WTC11 (cell line): ENCODE measurements at regions of chr6 and their contacts with region 1.

Region 1: GRCh38 chr6:32984605-32985389 is 16.4 kb downstream of the BRD2 start:
- DNase-seq: peak; percentile 94
- ATAC-seq: peak; percentile 79
- H3K4me3 Mint-ChIP-seq: no peak overlapping the region
- H3K27ac Mint-ChIP-seq: peak overlapping the region; percentile 82
- H3K4me1 Mint-ChIP-seq: peaks cover 18% of the 10 kb centered on the region
- H3K27me3 Mint-ChIP-seq: no peaks in the 10 kb centered on the region
- CTCF ChIP-seq: peak; percentile 68

Region 2: DNA sequence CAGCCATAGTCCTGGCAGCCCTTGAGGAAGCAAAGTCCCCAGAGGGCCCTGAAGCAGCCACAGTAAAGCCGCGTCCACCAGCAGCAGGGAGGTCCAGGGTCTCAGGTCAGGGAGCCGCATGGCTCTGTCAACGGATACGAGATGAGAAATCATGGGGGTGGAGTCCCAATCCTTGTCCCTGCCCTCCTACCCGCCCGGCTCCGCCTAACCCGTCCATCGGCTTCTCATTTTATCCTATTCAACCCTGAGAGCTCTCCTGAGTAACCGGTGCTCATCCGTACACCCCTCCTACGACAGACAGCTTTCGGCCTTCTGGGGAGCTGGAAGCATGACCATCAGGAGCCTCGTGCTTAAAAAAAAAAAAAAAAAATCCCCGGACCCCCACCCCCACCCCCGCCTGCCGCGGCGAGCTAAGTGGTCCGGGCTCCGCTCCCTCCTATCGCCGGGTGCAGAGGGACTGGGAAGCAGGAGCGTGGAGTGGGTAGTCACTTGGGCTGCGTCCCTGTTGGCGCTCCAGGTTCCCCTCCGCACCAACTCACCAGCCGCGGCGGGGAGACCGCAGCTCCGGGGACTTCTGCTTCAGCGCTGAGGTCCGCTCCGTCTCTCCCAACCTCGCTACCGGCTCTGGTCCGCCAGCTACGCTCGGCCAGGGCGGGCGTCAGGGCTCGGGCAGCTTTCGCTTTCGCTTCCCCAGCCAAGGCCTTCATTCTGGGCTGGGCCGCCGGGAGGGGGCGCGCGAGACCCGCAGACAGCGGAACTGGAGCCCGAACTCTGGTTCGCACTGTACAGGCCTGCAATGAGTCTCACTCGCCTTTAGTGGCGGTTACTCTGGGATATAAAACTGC is 146.5 kb before region 1 on chr6 and contains the start of gene TAP2:
- CTCF ChIA-PET with region 1: interaction called, 23 read pairs
- POLR2A ChIA-PET with region 1: no interaction called
- DNase-seq: peak; percentile 97
- ATAC-seq: peak; percentile 88
- H3K4me3 Mint-ChIP-seq: peak within 1 kb of the TSS; percentile 72
- H3K27ac Mint-ChIP-seq: no peak within 1 kb of the TSS
- H3K4me1 Mint-ChIP-seq: peaks cover 17% of the 10 kb centered on the region
- H3K27me3 Mint-ChIP-seq: peaks cover 55% of the 10 kb centered on the region
- CTCF ChIP-seq: peak; percentile 85
- total RNA-seq, gene TAP2: 14.7 to 23.0 TPM (median 16.5 TPM) in 3 replicates

Region 3: DNA sequence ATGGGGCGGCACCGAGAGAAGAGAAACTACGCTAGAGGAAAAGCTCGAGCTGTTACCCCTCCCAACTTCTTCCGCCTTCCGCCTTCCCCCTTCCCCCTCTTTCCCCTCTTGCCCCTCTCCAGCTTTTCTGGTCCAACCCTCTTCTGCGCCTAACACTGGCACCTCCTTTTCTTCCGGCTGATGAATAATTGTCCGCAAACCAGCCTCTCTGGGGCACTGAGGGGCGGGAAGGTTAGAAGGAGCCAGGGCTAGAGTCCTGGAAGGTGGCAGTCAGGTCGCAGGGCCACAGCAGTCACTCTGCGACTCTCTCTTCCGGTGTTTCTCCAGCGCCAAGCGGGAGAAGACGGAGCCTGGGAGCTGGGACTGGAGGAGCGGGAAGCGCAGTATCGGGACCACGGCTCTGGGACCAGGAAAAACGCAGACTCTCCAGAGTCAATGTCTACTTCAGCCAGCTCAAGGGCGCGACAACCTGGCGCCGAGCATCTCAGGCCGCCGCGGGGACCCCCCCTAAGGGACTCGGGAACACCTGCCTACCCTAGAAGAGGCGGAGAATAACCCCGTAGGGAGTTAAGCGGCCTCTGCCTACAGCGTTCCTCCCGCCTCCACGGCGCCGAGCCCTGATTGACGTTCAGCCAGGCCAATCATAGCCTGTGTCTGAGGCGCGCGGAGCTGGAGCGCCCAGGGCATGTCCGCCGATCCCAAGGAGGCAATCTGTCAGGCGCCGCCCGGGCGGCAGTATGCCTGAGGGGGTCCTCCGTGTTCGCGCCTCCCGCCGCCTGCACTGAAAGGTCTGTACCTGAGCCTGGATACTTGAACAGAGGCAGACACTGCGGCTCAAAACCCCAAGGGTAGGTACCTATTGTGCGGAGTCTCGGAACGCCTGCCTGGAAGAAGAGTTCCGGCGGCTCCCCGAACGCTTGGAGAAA is 90.5 kb before region 1 on chr6:
- CTCF ChIA-PET with region 1: interaction called, 44 read pairs
- POLR2A ChIA-PET with region 1: interaction called, 4 read pairs
- DNase-seq: peak; percentile 96
- ATAC-seq: peak; percentile 98
- H3K4me3 Mint-ChIP-seq: peak overlapping the region; percentile 98
- H3K27ac Mint-ChIP-seq: peak overlapping the region; percentile 99
- H3K4me1 Mint-ChIP-seq: peaks cover 13% of the 10 kb centered on the region
- H3K27me3 Mint-ChIP-seq: peaks cover 3% of the 10 kb centered on the region; the same call in 1 of the 2 replicates
- CTCF ChIP-seq: no peak

Region 4: DNA sequence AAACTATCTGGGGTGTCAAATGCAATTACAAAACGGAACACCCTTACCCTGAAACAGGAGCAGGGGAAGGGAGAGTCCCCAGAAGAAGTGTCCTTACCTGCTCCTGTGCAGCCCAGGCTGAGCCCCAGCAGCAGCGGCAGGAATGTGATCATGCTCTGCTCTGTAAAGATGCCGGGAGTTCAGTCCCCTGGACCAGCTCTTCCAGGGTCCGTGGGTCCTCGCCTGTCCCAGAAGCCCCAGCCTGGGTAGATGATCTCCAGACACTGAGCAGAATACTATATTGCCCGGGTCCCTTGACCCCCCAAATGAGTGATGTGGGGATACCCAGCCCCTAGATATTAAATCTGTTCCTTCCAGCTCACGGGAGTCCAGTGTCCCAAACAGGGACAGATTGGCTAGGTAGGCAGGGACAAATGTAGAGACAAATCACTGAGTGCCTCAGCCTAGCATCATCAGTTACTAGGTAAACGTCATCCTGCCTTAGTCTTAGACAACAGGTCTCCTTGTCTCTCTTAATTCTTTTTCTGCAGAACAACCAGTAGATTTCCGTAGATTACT is 44.1 kb before region 1 on chr6 and contains the start of gene HLA-DMB:
- CTCF ChIA-PET with region 1: interaction called, 21 read pairs
- POLR2A ChIA-PET with region 1: no interaction called
- DNase-seq: peak; percentile 23
- ATAC-seq: peak; percentile 97
- H3K4me3 Mint-ChIP-seq: peak within 1 kb of the TSS; percentile 60
- H3K27ac Mint-ChIP-seq: peak within 1 kb of the TSS; percentile 67
- H3K4me1 Mint-ChIP-seq: peaks cover 13% of the 10 kb centered on the region
- H3K27me3 Mint-ChIP-seq: peaks cover 17% of the 10 kb centered on the region
- CTCF ChIP-seq: no peak
- total RNA-seq, gene HLA-DMB: 1.1 to 2.7 TPM (median 2.3 TPM) in 3 replicates

Region 5: GRCh38 chr6:33000055-33000454 is 15.3 kb after region 1 on chr6:
- CTCF ChIA-PET with region 1: interaction called, 42 read pairs
- POLR2A ChIA-PET with region 1: interaction called, 3 read pairs
- DNase-seq: peak; percentile 67
- ATAC-seq: peak; percentile 98
- H3K4me3 Mint-ChIP-seq: no peak overlapping the region
- H3K27ac Mint-ChIP-seq: no peak overlapping the region
- H3K4me1 Mint-ChIP-seq: peaks cover 4% of the 10 kb centered on the region
- H3K27me3 Mint-ChIP-seq: peaks cover 2% of the 10 kb centered on the region; the same call in 1 of the 2 replicates
- CTCF ChIP-seq: peak; percentile 21; the same call in 1 of the 2 replicates

Region 6: DNA sequence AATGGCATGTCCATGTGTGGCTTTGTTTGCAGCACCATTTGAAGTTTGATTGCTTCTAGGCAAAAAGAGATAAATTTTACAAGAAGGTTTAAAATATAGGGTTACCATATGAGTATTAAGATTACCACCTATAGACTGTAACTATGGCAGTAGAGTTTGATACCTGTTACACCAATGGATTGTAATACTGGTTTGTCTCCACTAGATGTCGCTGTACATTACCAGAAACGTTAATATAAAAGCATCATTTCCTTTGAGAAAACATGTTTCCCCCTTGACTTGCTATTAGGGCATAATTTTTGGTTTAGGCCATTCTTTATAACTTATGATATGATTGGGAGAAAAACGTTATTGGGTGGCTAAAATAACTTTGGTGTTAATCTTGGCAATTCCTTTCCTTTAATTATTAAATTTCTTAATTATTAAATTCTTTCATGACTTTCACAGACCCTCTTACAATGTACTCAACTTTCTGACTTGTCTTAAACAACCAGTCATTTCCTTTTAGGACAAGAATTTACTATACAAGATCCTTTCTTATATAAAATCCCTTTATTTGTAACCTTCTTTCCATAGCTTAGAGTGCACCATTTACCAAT is 133.8 kb after region 1 on chr6:
- CTCF ChIA-PET with region 1: interaction called, 12 read pairs
- POLR2A ChIA-PET with region 1: interaction called, 3 read pairs
- DNase-seq: no peak
- ATAC-seq: no peak
- H3K4me3 Mint-ChIP-seq: peak overlapping the region; percentile 98
- H3K27ac Mint-ChIP-seq: peak overlapping the region; percentile 100
- H3K4me1 Mint-ChIP-seq: peaks cover 76% of the 10 kb centered on the region
- H3K27me3 Mint-ChIP-seq: peaks cover 2% of the 10 kb centered on the region; the same call in 1 of the 2 replicates
- CTCF ChIP-seq: peak; percentile 89

Region 7: DNA sequence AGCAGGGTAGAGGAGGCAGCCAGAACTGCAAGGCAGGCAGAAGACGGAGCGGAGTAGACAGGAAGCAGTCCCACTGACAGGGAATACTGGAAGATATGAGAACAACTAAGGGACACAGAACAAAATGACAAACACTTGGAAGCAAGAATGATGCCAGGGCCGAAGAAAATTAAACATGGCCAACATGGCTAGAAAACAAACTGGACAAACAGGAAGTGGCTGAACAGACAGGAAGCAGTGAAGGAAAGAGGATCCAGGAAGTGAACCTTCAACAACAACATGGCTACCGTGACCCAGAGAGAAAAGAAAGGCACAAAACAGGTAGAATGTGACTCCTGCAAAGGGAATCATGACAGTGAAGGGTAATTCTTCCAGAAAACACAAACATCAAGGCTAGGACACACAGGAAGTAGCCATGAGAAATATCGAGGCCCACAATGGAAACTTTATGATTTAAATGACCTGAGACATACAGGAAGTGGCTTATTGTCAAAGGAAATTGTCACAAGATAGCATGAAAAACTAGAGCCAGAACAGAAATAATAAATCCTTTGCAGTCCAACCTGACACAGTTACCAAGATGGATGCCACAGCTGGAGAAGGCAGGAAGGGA is 198.4 kb after region 1 on chr6:
- CTCF ChIA-PET with region 1: no interaction called
- POLR2A ChIA-PET with region 1: no interaction called
- DNase-seq: no peak
- ATAC-seq: no peak
- H3K4me3 Mint-ChIP-seq: no peak overlapping the region
- H3K27ac Mint-ChIP-seq: peak overlapping the region; percentile 85; the same call in 1 of the 2 replicates
- H3K4me1 Mint-ChIP-seq: peaks cover 7% of the 10 kb centered on the region
- H3K27me3 Mint-ChIP-seq: peaks cover 18% of the 10 kb centered on the region
- CTCF ChIP-seq: no peak